ENCODE measurements at regions of chr1 and their contacts with region 1.

Region 1: GRCh38 chr1:206612129-206612876 is at the start of gene EIF2D:
- DNase-seq: peak; percentile 73
- H3K4me3 ChIP-seq: peak within 1 kb of the TSS; percentile 93
- H3K27ac ChIP-seq: peak within 1 kb of the TSS; percentile 93
- H3K27me3 ChIP-seq: peaks cover 6% of the 10 kb centered on the region
- CTCF ChIP-seq: peak; percentile 91
- polyA plus RNA-seq, gene EIF2D: 71.8 and 74.0 TPM in 2 replicates

Region 2: GRCh38 chr1:206507284-206508129 is 104.8 kb before region 1 on chr1 and contains the start of gene RASSF5:
- CTCF ChIA-PET with region 1: interaction called, 5 read pairs
- POLR2A ChIA-PET with region 1: interaction called, 10 read pairs
- DNase-seq: no peak
- H3K4me3 ChIP-seq: peak within 1 kb of the TSS; percentile 60
- H3K27ac ChIP-seq: no peak within 1 kb of the TSS
- H3K27me3 ChIP-seq: peaks cover 8% of the 10 kb centered on the region
- CTCF ChIP-seq: no peak
- polyA plus RNA-seq, gene RASSF5: 2.3 and 2.4 TPM in 2 replicates

Region 3: GRCh38 chr1:206628916-206629315 is 16.6 kb after region 1 on chr1:
- CTCF ChIA-PET with region 1: interaction called, 37 read pairs
- POLR2A ChIA-PET with region 1: interaction called, 19 read pairs
- DNase-seq: no peak
- H3K4me3 ChIP-seq: no peak overlapping the region
- H3K27ac ChIP-seq: no peak overlapping the region
- H3K27me3 ChIP-seq: peaks cover 2% of the 10 kb centered on the region
- CTCF ChIP-seq: no peak

Region 4: GRCh38 chr1:206674745-206675175 is 62.5 kb after region 1 on chr1:
- CTCF ChIA-PET with region 1: interaction called, 10 read pairs
- POLR2A ChIA-PET with region 1: interaction called, 5 read pairs
- DNase-seq: peak; percentile 98
- H3K4me3 ChIP-seq: no peak overlapping the region
- H3K27ac ChIP-seq: peak overlapping the region; percentile 96
- H3K27me3 ChIP-seq: peaks cover 3% of the 10 kb centered on the region
- CTCF ChIP-seq: no peak

Region 5: DNA sequence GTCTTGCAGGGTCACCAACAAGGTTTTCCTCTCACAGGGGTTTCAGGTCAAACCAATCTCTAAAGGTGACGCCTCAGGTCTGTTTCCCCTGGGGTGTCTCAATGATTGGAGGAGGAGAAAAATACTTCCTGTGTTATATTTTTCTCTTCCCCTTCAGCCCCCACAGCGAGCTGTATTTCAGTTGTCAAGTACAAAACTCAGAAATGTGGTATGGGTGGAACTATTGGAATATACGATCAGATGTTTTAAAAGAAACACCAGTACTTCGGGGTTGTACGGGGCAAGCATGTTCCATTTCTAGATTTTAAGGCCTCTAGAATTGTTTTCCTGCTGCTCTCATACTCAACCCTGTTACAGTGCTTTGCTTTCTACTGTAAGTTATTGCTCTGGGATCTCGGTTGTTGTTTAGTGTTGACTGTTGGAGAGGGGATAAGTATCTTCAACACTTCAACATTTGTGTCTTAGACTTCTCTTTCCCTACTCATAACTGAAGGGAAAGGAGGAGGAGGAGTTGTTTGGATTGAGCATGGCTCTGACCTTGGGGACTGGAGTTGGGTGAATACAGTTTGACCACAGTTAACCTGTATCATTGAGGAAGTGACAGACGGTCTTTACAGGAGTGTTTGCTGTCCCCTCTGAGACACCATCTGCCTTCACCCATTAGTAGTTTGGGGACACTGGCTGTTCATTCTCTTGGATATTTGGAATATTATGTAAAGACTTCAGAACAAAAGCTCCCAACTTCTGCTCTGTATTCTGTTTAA is 74.4 kb after region 1 on chr1:
- CTCF ChIA-PET with region 1: interaction called, 15 read pairs
- POLR2A ChIA-PET with region 1: no interaction called
- DNase-seq: no peak
- H3K4me3 ChIP-seq: peak overlapping the region; percentile 81
- H3K27ac ChIP-seq: peak overlapping the region; percentile 61
- H3K27me3 ChIP-seq: no peaks in the 10 kb centered on the region
- CTCF ChIP-seq: no peak

Region 6: DNA sequence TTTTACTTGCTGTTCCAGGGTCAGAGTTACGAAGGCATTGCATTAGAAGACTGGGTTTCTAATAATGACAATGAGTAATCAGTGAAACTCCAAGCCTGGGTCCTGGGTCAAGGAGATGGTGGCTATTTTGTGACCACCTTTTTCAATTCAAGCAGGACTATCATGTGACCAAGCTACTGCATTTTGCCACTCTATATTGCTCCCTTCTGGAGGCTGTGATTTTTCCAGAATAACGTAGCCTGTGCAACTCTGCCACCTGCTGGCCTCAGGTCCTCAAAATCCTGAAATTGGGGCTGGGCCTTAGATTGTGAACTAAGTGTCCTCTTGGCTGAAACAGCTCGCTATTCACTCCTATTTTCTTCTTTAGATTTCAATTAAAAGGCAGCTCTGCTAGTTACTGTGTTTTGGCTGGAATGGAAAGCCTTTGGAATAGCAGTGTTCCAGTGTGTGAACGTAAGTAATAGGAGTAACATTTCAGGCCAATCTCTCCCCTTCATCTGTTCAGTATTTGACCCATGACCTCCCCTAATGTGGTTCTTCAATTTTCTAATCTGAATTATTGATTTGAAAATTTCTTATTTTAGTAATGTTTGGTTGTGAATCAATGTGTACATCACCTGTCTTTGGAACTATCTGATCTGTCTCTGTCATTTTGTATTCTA is 1086.7 kb after region 1 on chr1:
- CTCF ChIA-PET with region 1: no interaction called
- POLR2A ChIA-PET with region 1: no interaction called
- DNase-seq: peak; percentile 7
- H3K4me3 ChIP-seq: no peak overlapping the region
- H3K27ac ChIP-seq: no peak overlapping the region
- H3K27me3 ChIP-seq: no peaks in the 10 kb centered on the region
- CTCF ChIP-seq: peak; percentile 71

Measured in AG04450 (cell line).